ENCODE measurements at regions of chr9 and their contacts with region 1.

Region 1: GRCh38 chr9:101311758-101312420 is 72.9 kb downstream of the BAAT start:
- DNase-seq: peak; percentile 70
- ATAC-seq: peak; percentile 54
- H3K4me3 ChIP-seq: no peak overlapping the region
- H3K4me3 Mint-ChIP-seq: no peak overlapping the region
- H3K27ac ChIP-seq: no peak overlapping the region
- H3K27ac Mint-ChIP-seq: no peak overlapping the region
- H3K4me1 ChIP-seq: no peaks in the 10 kb centered on the region
- H3K4me1 Mint-ChIP-seq: no peaks in the 10 kb centered on the region
- H3K27me3 ChIP-seq: peaks cover 0 to 4% (median 0%) of the 10 kb centered on the region in 4 experiments
- H3K27me3 Mint-ChIP-seq: peaks cover 3% of the 10 kb centered on the region
- CTCF ChIP-seq: peak; percentile 93

Region 2: GRCh38 chr9:100714372-100715099 is 597.4 kb before region 1 on chr9:
- CTCF ChIA-PET with region 1: interaction called, 15 read pairs
- POLR2A ChIA-PET with region 1: no interaction called
- intact Hi-C with region 1: no loop called
- DNase-seq: peak; percentile 24
- ATAC-seq: no peak
- H3K4me3 ChIP-seq: no peak overlapping the region
- H3K4me3 Mint-ChIP-seq: no peak overlapping the region
- H3K27ac ChIP-seq: no peak overlapping the region
- H3K27ac Mint-ChIP-seq: no peak overlapping the region
- H3K4me1 ChIP-seq: no peaks in the 10 kb centered on the region
- H3K4me1 Mint-ChIP-seq: no peaks in the 10 kb centered on the region
- H3K27me3 ChIP-seq: peaks cover 0 to 6% (median 0%) of the 10 kb centered on the region in 4 experiments
- H3K27me3 Mint-ChIP-seq: no peaks in the 10 kb centered on the region
- CTCF ChIP-seq: peak; percentile 70

Region 3: DNA sequence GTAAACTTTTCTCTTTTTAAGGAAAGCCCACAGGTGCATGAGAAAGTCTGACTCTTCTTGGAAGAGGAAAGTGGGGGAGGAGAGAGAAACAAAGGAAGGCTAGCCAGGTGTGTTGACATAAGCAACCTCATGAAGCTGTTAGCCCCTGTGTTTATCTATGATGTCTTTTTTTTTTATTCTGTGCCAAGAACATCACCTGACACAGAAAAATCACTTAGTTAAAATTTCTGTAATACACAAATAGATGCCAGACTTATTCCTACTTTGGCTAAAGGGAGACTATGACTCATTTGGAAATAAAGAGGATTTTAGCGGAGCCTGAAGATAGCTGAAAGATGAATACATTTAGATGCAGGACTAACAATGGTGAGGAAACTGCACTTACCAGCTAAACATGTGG is 14.6 kb after region 1 on chr9:
- CTCF ChIA-PET with region 1: interaction called, 12 read pairs
- POLR2A ChIA-PET with region 1: no interaction called
- intact Hi-C with region 1: no loop called
- DNase-seq: no peak
- ATAC-seq: no peak
- H3K4me3 ChIP-seq: no peak overlapping the region
- H3K4me3 Mint-ChIP-seq: no peak overlapping the region
- H3K27ac ChIP-seq: no peak overlapping the region
- H3K27ac Mint-ChIP-seq: no peak overlapping the region
- H3K4me1 ChIP-seq: no peaks in the 10 kb centered on the region
- H3K4me1 Mint-ChIP-seq: no peaks in the 10 kb centered on the region
- H3K27me3 ChIP-seq: peaks cover 0 to 3% (median 0%) of the 10 kb centered on the region in 4 experiments
- H3K27me3 Mint-ChIP-seq: peaks cover 16% of the 10 kb centered on the region
- CTCF ChIP-seq: no peak

Measured in B cell (primary cell).